Activated CD4-positive, alpha-beta T cell treated with anti-CD3 and anti-CD28 coated beads for 36 hours (primary cell): ENCODE measurements at regions of chr2 and their contacts with region 1.

Region 1: GRCh38 chr2:96760036-96760985 is at the start of gene CNNM4:
- DNase-seq: peak; percentile 96
- ATAC-seq: peak; percentile 93
- H3K4me3 Mint-ChIP-seq: peak within 1 kb of the TSS; percentile 75
- H3K27ac Mint-ChIP-seq: peak within 1 kb of the TSS; percentile 82
- H3K4me1 Mint-ChIP-seq: peaks cover 43% of the 10 kb centered on the region
- H3K27me3 Mint-ChIP-seq: no peaks in the 10 kb centered on the region
- total RNA-seq, gene CNNM4: 7.1 to 11.3 TPM

Region 2: GRCh38 chr2:96195410-96196066 is 564.8 kb before region 1 on chr2:
- CTCF ChIA-PET with region 1: no interaction called
- POLR2A ChIA-PET with region 1: no interaction called
- intact Hi-C with region 1: no loop called
- DNase-seq: no peak
- ATAC-seq: no peak
- H3K4me3 Mint-ChIP-seq: no peak overlapping the region
- H3K27ac Mint-ChIP-seq: peak overlapping the region; percentile 17
- H3K4me1 Mint-ChIP-seq: peaks cover 33% of the 10 kb centered on the region
- H3K27me3 Mint-ChIP-seq: no peaks in the 10 kb centered on the region

Region 3: DNA sequence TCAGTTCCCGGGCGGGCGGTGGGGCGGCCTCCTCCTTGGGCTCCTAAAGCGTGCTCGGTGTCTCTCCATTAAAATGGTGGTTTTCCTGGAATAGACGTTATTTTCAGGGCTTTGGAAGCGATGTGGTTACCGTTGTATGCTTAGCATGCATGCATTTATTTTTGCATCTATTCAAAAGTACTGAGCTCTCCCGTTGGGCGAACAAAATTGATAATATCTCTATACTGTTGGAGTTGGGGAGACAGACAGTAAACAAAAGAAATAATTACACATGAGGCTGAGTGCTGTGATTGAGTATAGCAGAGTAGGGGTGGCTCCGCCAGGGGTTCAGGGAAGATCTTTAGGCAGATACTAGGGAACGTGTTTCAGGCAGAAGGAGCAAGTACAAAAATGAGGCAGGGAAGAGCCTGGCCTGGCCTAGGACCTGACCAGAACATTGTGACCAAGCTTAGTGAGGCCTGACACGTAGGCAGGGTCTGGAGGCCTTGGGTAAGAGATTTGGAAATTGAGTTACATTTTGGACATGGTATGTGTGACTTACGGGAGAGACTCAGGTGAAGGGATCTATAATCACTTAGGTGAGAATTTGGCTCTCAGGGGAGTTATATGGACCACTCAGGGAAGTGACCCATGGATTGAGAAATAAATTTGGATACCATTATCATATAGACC is 424.1 kb before region 1 on chr2:
- CTCF ChIA-PET with region 1: no interaction called
- POLR2A ChIA-PET with region 1: no interaction called
- intact Hi-C with region 1: loop called in 1 of 2 experiments (anchors 5 kb)
- DNase-seq: no peak
- ATAC-seq: no peak
- H3K4me3 Mint-ChIP-seq: peak overlapping the region; percentile 88
- H3K27ac Mint-ChIP-seq: peak overlapping the region; percentile 85
- H3K4me1 Mint-ChIP-seq: peaks cover 47% of the 10 kb centered on the region
- H3K27me3 Mint-ChIP-seq: no peaks in the 10 kb centered on the region

Region 4: DNA sequence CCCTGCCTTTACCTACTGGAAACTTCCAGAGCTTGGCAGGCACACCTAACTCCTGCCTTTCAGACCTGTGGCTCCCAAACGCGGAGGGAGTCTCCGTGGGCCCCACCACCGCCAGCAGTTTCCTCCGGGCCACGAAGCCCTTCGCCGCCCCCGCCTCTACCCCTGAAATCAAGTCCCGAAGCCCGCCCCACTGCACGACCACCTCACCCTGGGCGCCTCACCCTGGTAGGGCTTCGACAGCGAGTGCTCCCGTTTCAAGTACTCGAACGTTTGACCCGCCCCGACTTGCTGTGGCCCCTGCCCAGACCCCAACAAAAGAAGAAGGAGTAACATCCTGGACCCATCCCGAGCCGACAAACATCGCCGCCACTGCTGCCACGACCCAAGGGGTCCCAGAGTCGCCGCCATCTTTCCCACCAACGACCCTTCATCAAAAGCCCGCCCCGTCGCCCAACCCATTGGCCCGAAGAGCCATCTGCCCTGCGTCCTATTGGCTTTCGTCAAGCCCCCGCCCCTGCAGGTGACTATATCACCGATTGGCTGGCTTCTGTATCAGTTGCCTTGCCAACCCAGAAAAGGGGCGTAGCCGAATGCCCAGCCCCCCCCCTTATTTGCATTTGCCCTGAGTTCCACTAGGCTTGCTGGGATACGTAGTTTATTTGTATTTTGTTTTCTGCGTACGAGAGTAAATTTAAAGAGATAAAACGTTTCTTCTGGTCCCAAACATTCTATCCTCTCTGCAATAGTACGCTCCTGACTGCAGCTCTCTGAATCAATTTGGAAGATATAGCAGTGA is 20.5 kb before region 1 on chr2 and contains the start of gene LMAN2L:
- CTCF ChIA-PET with region 1: interaction called, 15 read pairs
- POLR2A ChIA-PET with region 1: interaction called, 6 read pairs
- intact Hi-C with region 1: loop called (anchors 1 kb)
- DNase-seq: peak; percentile 98
- ATAC-seq: peak; percentile 100
- H3K4me3 Mint-ChIP-seq: peak within 1 kb of the TSS; percentile 98
- H3K27ac Mint-ChIP-seq: peak within 1 kb of the TSS; percentile 84
- H3K4me1 Mint-ChIP-seq: peaks cover 40% of the 10 kb centered on the region
- H3K27me3 Mint-ChIP-seq: no peaks in the 10 kb centered on the region
- total RNA-seq, gene LMAN2L: 4.8 to 5.7 TPM

Region 5: DNA sequence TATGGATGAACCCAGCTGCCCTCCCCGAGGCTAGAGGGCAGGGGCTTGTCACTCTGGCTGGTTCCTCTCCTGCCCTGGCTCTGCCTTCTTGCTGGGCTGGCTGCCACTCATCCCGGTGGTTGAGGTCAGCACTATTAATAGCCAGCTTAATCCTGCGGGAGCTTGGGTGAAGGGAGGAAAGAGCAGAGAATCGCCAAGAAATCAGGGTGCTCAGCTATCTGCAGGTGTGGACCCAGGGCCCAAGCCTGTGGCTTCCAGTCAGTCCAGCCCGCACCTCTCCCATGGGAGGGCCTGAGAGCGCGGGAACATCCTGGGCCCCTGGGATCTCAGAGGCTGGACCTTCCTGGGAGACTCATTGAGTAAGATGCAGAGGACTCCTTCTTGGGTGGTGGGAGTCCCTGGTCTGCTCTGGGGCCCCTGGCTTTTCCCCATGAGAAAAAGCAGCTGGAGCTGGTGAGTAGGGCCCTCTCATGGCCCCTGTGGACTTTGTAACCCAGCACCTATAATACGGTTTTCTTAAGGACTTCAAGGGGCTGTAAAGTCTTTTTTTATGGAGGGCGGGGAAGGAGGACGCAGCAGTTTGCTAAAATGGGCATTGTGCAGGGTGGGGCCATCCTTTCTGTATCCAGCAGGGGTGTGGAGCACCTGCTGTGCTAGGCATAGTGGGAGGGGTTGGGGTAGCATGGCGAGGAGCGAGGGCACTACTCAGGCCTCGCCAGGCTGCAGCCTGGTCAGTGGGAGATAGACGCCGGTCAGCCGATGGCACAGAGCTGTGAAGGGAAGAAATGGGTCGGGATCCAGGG is 28.3 kb after region 1 on chr2:
- CTCF ChIA-PET with region 1: interaction called, 7 read pairs
- POLR2A ChIA-PET with region 1: no interaction called
- intact Hi-C with region 1: loop called in 1 of 2 experiments (anchors 2 kb)
- DNase-seq: no peak
- ATAC-seq: no peak
- H3K4me3 Mint-ChIP-seq: no peak overlapping the region
- H3K27ac Mint-ChIP-seq: no peak overlapping the region
- H3K4me1 Mint-ChIP-seq: peaks cover 5% of the 10 kb centered on the region
- H3K27me3 Mint-ChIP-seq: no peaks in the 10 kb centered on the region

Region 6: GRCh38 chr2:96801005-96801785 is 40.9 kb after region 1 on chr2:
- CTCF ChIA-PET with region 1: interaction called, 7 read pairs
- POLR2A ChIA-PET with region 1: interaction called, 3 read pairs
- intact Hi-C with region 1: loop called in 1 of 2 experiments (anchors 5 kb)
- DNase-seq: peak; percentile 87
- ATAC-seq: peak; percentile 92
- H3K4me3 Mint-ChIP-seq: no peak overlapping the region
- H3K27ac Mint-ChIP-seq: no peak overlapping the region
- H3K4me1 Mint-ChIP-seq: peaks cover 2% of the 10 kb centered on the region
- H3K27me3 Mint-ChIP-seq: no peaks in the 10 kb centered on the region